ENCODE measurements at regions of chr1 and their contacts with region 1.

Region 1: GRCh38 chr1:219066631-219067349 is 106.9 kb upstream of the LYPLAL1 start:
- DNase-seq: peak; percentile 35
- H3K4me3 Mint-ChIP-seq: no peak overlapping the region
- H3K27ac Mint-ChIP-seq: peak overlapping the region; percentile 98
- H3K4me1 Mint-ChIP-seq: peaks cover 16% of the 10 kb centered on the region
- H3K27me3 Mint-ChIP-seq: no peaks in the 10 kb centered on the region
- CTCF ChIP-seq: peak; percentile 53

Region 2: GRCh38 chr1:218345673-218346390 is 721.0 kb before region 1 on chr1:
- CTCF ChIA-PET with region 1: interaction called, 18 read pairs
- intact Hi-C with region 1: no loop called
- DNase-seq: peak; percentile 70
- H3K4me3 Mint-ChIP-seq: no peak overlapping the region
- H3K27ac Mint-ChIP-seq: no peak overlapping the region
- H3K4me1 Mint-ChIP-seq: peaks cover 19% of the 10 kb centered on the region
- H3K27me3 Mint-ChIP-seq: no peaks in the 10 kb centered on the region
- CTCF ChIP-seq: no peak

Region 3: GRCh38 chr1:218585511-218586184 is 481.1 kb before region 1 on chr1:
- CTCF ChIA-PET with region 1: no interaction called
- intact Hi-C with region 1: loop called (anchors 2 kb)
- DNase-seq: peak; percentile 65
- H3K4me3 Mint-ChIP-seq: no peak overlapping the region
- H3K27ac Mint-ChIP-seq: peak overlapping the region; percentile 97
- H3K4me1 Mint-ChIP-seq: peaks cover 60% of the 10 kb centered on the region
- H3K27me3 Mint-ChIP-seq: no peaks in the 10 kb centered on the region
- CTCF ChIP-seq: no peak

Region 4: GRCh38 chr1:218779341-218780100 is 287.3 kb before region 1 on chr1:
- CTCF ChIA-PET with region 1: interaction called, 6 read pairs
- intact Hi-C with region 1: loop called (anchors 1 kb)
- DNase-seq: peak; percentile 31
- H3K4me3 Mint-ChIP-seq: no peak overlapping the region
- H3K27ac Mint-ChIP-seq: no peak overlapping the region
- H3K4me1 Mint-ChIP-seq: peaks cover 26% of the 10 kb centered on the region
- H3K27me3 Mint-ChIP-seq: no peaks in the 10 kb centered on the region
- CTCF ChIP-seq: no peak

Region 5: DNA sequence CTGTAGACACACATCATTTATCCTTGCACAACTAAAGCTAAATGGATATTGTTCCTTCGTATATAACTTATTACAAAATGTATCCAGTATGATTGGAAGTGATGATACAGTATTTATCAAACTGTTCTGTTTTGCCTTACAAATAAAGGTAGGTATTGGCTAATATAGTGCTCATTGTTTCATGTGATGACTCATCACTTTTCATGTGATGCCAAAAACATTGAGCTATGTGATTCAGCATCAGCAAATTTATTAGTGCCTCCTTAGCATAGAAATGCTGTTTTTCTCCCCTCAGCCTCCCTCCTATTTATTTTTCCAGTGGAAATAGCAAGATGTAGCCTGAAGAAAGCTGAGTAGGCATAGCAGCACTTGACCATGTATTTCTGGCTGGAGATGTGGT is 121.7 kb before region 1 on chr1:
- CTCF ChIA-PET with region 1: no interaction called
- intact Hi-C with region 1: loop called (anchors 2 kb)
- DNase-seq: no peak
- H3K4me3 Mint-ChIP-seq: no peak overlapping the region
- H3K27ac Mint-ChIP-seq: peak overlapping the region; percentile 66
- H3K4me1 Mint-ChIP-seq: peaks cover 51% of the 10 kb centered on the region
- H3K27me3 Mint-ChIP-seq: no peaks in the 10 kb centered on the region
- CTCF ChIP-seq: no peak

Region 6: GRCh38 chr1:218996362-218996761 is 70.4 kb before region 1 on chr1:
- CTCF ChIA-PET with region 1: no interaction called
- intact Hi-C with region 1: no loop called
- DNase-seq: no peak
- H3K4me3 Mint-ChIP-seq: no peak overlapping the region
- H3K27ac Mint-ChIP-seq: no peak overlapping the region
- H3K4me1 Mint-ChIP-seq: peaks cover 18% of the 10 kb centered on the region
- H3K27me3 Mint-ChIP-seq: no peaks in the 10 kb centered on the region
- CTCF ChIP-seq: no peak

Region 7: DNA sequence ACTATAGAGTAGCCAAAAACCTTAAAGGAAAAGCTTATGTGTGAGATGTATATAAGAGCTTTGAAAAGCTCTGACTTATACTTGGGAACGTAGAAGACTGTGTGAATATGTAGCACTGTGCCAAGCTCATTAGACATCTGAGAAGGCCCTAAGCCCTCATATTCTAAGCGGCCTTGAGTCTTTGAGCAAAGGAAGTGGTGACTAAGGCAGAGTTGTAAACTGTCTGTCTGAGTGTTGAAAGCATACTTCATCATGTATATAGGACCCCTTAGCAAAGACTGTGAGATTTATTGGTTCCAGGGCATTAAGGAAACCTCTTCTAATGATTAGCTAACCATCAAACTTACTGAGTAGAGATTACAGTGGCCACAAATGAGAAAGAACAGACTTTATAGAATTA is 46.4 kb before region 1 on chr1:
- CTCF ChIA-PET with region 1: no interaction called
- intact Hi-C with region 1: no loop called
- DNase-seq: no peak
- H3K4me3 Mint-ChIP-seq: no peak overlapping the region
- H3K27ac Mint-ChIP-seq: no peak overlapping the region
- H3K4me1 Mint-ChIP-seq: peaks cover 26% of the 10 kb centered on the region
- H3K27me3 Mint-ChIP-seq: no peaks in the 10 kb centered on the region
- CTCF ChIP-seq: no peak